ENCODE measurements at regions of chr3 and their contacts with region 1.

Region 1: DNA sequence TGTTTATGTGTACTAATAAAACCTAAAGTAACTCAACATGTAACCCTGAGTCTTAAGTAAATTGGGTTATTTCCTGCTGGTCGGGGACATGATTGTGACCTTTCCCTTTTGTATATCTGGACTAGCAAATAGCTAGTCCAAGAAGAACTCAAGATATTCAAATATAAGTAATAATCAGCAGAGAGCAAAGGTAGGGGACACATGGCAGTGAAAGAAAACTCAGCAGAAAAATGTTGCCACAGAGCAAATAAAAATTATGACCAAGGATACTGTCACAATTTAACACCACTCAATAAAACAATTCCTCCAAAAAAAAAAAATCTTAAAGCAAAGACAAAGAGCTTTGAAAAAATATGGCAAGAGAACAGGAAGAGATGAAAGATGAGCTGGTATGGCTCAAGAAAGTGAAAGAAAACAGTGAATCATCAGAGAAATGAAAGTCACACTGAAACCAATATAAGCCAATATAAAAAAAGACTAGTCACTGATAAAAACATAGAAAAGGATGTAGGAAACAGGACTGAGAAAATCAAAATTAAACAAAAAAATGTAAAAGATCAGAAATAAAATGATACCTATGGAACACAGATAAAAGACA is 43.4 kb downstream of the HLTF start:
- DNase-seq: peak; percentile 80
- ATAC-seq: peak; percentile 90
- H3K4me3 ChIP-seq: 0 out of 2 replicates have a peak overlapping the region, but pooled peaks have one; percentile 13
- H3K27ac ChIP-seq: peak overlapping the region; percentile 84
- H3K4me1 ChIP-seq: peaks cover 27% of the 10 kb centered on the region
- H3K27me3 ChIP-seq: no peaks in the 10 kb centered on the region
- CTCF ChIP-seq: no peak

Region 2: GRCh38 chr3:149003653-149004305 is 39.1 kb before region 1 on chr3:
- CTCF ChIA-PET with region 1: no interaction called
- POLR2A ChIA-PET with region 1: no interaction called
- intact Hi-C with region 1: loop called (anchors 2 kb)
- DNase-seq: peak; percentile 85
- ATAC-seq: peak; percentile 83
- H3K4me3 ChIP-seq: no peak overlapping the region
- H3K27ac ChIP-seq: peak overlapping the region; percentile 78
- H3K4me1 ChIP-seq: peaks cover 23% of the 10 kb centered on the region
- H3K27me3 ChIP-seq: no peaks in the 10 kb centered on the region
- CTCF ChIP-seq: no peak

Region 3: GRCh38 chr3:149085828-149086231 is 42.9 kb after region 1 on chr3:
- CTCF ChIA-PET with region 1: no interaction called
- POLR2A ChIA-PET with region 1: no interaction called
- intact Hi-C with region 1: loop called (anchors 2 kb)
- DNase-seq: peak; percentile 46
- ATAC-seq: peak; percentile 50
- H3K4me3 ChIP-seq: peak overlapping the region; percentile 98
- H3K27ac ChIP-seq: no peak overlapping the region
- H3K4me1 ChIP-seq: peaks cover 16% of the 10 kb centered on the region
- H3K27me3 ChIP-seq: no peaks in the 10 kb centered on the region
- CTCF ChIP-seq: no peak

Region 4: DNA sequence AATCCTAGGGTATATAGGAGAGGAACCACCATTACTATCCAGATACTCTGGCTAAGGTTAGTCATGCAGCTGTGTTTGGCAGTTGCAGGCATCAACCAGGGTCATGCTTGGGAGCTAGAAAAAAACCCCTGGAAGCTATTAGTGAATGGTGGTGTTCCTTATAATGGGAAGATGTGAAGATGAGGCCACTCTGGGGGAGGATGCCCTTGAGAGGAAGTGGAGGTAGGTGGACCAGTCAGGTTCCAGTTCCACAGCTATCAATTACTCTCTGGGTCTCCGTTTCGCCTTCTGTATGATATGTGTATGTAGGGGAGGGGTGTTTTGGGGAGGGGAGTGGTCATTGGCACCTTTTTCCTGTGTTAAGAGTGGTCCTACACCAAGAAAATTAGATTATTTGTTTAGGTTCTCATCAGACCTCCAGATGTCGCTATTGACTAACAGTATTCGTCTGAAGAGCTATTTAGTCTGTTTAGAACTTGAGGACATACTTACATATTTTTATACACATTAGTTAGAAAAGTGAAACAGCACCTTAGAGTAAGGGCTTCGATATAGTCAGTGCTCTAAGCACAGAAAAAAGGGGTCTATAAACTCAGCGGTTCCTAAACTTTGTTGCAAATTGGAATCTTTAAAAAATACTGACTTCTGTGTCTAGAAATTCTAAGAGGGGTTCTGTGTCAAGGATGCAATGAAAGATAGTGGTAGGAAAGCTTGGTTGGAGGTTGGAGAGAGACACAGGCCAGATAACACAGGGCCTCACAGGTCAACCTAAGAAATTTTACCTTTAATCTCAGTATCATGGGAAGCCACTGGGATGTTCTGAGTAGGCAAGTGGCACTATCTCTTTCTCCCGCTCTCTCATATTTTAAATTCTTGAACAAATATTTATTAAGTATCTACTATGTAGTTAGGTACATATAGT is 77.4 kb after region 1 on chr3:
- CTCF ChIA-PET with region 1: no interaction called
- POLR2A ChIA-PET with region 1: no interaction called
- intact Hi-C with region 1: no loop called
- DNase-seq: peak; percentile 86
- ATAC-seq: peak; percentile 82
- H3K4me3 ChIP-seq: no peak overlapping the region
- H3K27ac ChIP-seq: no peak overlapping the region
- H3K4me1 ChIP-seq: 0 out of 2 replicates have a peak, but pooled peaks cover 4% of the 10 kb centered on the region
- H3K27me3 ChIP-seq: no peaks in the 10 kb centered on the region
- CTCF ChIP-seq: peak; percentile 83

Region 5: DNA sequence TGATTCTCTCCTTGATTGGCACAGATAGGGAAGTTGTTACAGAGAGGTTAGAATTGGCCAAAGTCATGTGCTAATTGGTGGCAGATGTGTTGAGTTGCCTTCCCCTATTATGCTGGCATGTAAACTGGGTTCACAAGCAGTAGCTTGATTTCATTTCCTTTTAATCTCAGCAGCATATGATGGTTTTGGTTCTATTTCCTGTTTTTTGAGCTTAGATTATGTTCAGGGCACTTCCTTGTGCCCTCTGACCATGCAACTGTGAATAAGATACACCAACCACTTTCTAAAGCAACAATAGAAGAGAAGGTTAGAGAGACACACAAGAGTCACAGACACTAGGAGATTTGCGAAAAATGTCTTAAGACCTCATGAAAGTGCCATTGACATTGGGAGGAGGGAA is 103.1 kb after region 1 on chr3:
- CTCF ChIA-PET with region 1: no interaction called
- POLR2A ChIA-PET with region 1: no interaction called
- intact Hi-C with region 1: no loop called
- DNase-seq: no peak
- ATAC-seq: no peak
- H3K4me3 ChIP-seq: no peak overlapping the region
- H3K27ac ChIP-seq: no peak overlapping the region
- H3K4me1 ChIP-seq: no peaks in the 10 kb centered on the region
- H3K27me3 ChIP-seq: no peaks in the 10 kb centered on the region
- CTCF ChIP-seq: no peak

Measured in PC-3 (cell line).